Heart left ventricle (tissue), 16 donors: ENCODE measurements at regions of chr1 and their contacts with region 1.

Region 1: GRCh38 chr1:58075188-58075578 is 471.3 kb downstream of the OMA1 start:
- DNase-seq: no peak
- ATAC-seq: peak in 2 of 4 donors; percentile 30 to 31
- H3K4me3 ChIP-seq: no peak overlapping the region
- H3K27ac ChIP-seq: no peak overlapping the region
- H3K4me1 ChIP-seq: peaks cover 0 to 15% (median 3%) of the 10 kb centered on the region in 12 donors
- H3K27me3 ChIP-seq: no peaks in the 10 kb centered on the region
- CTCF ChIP-seq: no peak
- POLR2A ChIP-seq: no peak

Region 2: DNA sequence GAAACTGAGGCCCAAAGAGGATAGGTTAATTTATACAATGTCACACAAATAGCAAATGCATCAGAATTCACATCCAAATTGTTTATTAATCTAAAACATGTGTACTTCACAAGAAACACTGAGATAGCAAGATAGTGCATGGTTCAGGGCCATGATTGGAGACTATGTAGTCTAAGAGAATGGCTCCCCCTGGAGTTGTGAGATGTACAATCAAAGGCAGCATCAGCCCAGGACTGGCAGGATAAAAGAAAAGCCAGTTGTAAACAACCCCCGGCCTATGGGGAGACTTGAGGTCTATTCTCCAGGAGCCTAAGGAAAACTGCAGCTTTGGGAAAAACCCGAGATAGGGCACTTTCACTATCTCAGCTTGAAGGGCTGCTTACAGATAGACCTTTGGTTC is 39.7 kb before region 1 on chr1:
- intact Hi-C with region 1: no loop called
- DNase-seq: no peak
- ATAC-seq: no peak
- H3K4me3 ChIP-seq: no peak overlapping the region
- H3K27ac ChIP-seq: no peak overlapping the region
- H3K4me1 ChIP-seq: no peaks in the 10 kb centered on the region
- H3K27me3 ChIP-seq: peaks cover 0 to 12% (median 0%) of the 10 kb centered on the region in 9 donors
- CTCF ChIP-seq: peak in 1 of 12 donors; percentile 10
- POLR2A ChIP-seq: no peak

Region 3: GRCh38 chr1:58096714-58097113 is 21.5 kb after region 1 on chr1:
- intact Hi-C with region 1: loop called in 1 of 10 experiments (anchors 2 kb)
- DNase-seq: no peak
- ATAC-seq: no peak
- H3K4me3 ChIP-seq: no peak overlapping the region
- H3K27ac ChIP-seq: no peak overlapping the region
- H3K4me1 ChIP-seq: no peaks in the 10 kb centered on the region
- H3K27me3 ChIP-seq: no peaks in the 10 kb centered on the region
- CTCF ChIP-seq: no peak
- POLR2A ChIP-seq: no peak

Region 4: GRCh38 chr1:58116284-58116683 is 41.1 kb after region 1 on chr1:
- intact Hi-C with region 1: no loop called
- DNase-seq: no peak
- ATAC-seq: no peak
- H3K4me3 ChIP-seq: no peak overlapping the region
- H3K27ac ChIP-seq: no peak overlapping the region
- H3K4me1 ChIP-seq: no peaks in the 10 kb centered on the region
- H3K27me3 ChIP-seq: no peaks in the 10 kb centered on the region
- CTCF ChIP-seq: no peak
- POLR2A ChIP-seq: no peak

Region 5: DNA sequence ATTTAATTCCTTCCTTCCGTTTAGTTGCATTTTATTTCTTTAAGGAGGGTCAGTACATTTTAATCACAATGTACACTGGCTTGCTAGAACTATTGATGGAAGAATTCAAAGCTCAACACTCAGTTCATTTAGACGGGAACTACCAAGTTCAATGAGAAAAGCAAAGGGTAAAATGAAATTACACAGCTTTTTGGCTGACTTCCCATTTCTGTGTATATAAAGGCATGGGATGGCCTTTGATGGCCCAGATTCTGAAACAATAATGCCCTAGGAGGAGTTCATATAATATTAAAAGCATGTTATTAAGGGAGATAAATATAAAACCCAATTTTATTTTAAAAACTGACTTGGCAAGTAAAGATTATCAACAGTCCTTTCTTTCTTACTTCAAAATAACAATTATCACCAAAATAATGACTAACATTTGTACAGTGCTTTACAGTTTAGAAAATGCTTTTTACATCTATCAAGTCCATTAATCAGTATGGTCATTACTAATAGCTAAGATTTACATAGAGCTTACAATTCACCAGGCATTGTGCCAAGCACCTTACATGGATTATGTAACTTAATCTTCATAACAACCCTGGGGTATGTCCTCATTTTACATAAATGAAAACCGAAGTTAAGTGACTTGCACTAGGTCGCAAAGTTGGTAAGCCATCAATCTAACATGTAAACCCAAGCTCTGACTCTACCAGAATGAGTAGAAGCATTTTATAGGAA is 69.0 kb after region 1 on chr1:
- intact Hi-C with region 1: loop called in 1 of 10 experiments (anchors 10 kb)
- DNase-seq: no peak
- ATAC-seq: no peak
- H3K4me3 ChIP-seq: no peak overlapping the region
- H3K27ac ChIP-seq: no peak overlapping the region
- H3K4me1 ChIP-seq: no peaks in the 10 kb centered on the region
- H3K27me3 ChIP-seq: no peaks in the 10 kb centered on the region
- CTCF ChIP-seq: no peak
- POLR2A ChIP-seq: no peak

Region 6: DNA sequence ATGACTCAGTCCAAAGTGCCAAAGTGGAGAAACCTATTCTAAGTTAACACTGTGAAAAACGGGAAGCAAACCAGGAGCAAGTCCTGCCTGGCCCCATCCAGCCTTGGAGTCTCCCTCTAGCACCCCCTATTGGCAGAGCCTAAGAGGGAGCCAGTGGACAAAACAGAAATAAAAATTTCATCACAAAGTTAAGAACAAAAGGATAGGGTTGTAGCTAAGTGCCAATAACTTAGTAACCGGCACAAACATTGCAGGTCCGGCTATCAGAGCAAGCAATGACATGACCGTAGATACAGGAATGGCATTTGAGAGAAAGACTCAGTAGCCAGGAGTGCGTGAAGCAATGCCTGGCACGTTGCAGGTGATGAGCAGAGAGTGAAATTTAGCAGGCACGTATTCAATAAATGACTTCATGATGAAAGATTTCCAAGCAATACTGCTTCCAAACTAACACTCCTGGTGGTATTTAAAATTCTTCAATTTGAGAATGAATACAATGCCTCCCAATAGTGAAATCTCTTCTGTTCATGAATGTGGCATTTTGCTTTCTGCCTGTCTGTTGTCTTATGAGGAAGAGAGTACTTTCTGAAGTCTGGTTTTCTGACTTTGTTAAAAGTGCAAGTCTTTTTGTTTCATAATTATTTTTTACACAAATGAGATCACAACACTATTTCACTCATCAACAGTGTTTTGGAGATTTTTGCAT is 80.4 kb after region 1 on chr1:
- intact Hi-C with region 1: loop called in 1 of 10 experiments (anchors 10 kb)
- DNase-seq: peak in 4 of 5 donors; percentile 30 to 68 (median 58)
- ATAC-seq: peak; percentile 90 to 96 (median 94)
- H3K4me3 ChIP-seq: no peak overlapping the region
- H3K27ac ChIP-seq: peak overlapping the region in 6 of 12 donors; percentile 33 to 48 (median 42)
- H3K4me1 ChIP-seq: peaks cover 0 to 24% (median 1%) of the 10 kb centered on the region in 12 donors
- H3K27me3 ChIP-seq: no peaks in the 10 kb centered on the region
- CTCF ChIP-seq: peak; percentile 42 to 68 (median 56)
- POLR2A ChIP-seq: no peak